Spleen (tissue), 13 donors: ENCODE measurements at regions of chr6 and their contacts with region 1.

Region 1: GRCh38 chr6:108492131-108492766 is 68.5 kb upstream of the FOXO3 start:
- DNase-seq: no peak
- H3K4me3 ChIP-seq: no peak overlapping the region
- H3K27ac ChIP-seq: no peak overlapping the region
- H3K4me1 ChIP-seq: peaks cover 0 to 6% (median 0%) of the 10 kb centered on the region in 6 donors
- H3K27me3 ChIP-seq: no peaks in the 10 kb centered on the region
- CTCF ChIP-seq: peak in 9 of 11 experiments; percentile 20 to 59 (median 49)
- POLR2A ChIP-seq: no peak

Region 2: GRCh38 chr6:108113557-108114519 is 378.4 kb before region 1 on chr6:
- intact Hi-C with region 1: loop called (anchors 5 kb)
- DNase-seq: no peak
- H3K4me3 ChIP-seq: peak overlapping the region in 5 of 8 donors; percentile 7 to 69 (median 11)
- H3K27ac ChIP-seq: no peak overlapping the region
- H3K4me1 ChIP-seq: peaks cover 23 to 57% (median 50%) of the 10 kb centered on the region in 6 donors
- H3K27me3 ChIP-seq: peaks cover 5 to 95% (median 46%) of the 10 kb centered on the region in 7 donors
- CTCF ChIP-seq: peak; percentile 27 to 64 (median 48)
- POLR2A ChIP-seq: no peak